Endothelial cell of umbilical vein (primary cell): ENCODE measurements at regions of chr12 and their contacts with region 1.

Region 1: DNA sequence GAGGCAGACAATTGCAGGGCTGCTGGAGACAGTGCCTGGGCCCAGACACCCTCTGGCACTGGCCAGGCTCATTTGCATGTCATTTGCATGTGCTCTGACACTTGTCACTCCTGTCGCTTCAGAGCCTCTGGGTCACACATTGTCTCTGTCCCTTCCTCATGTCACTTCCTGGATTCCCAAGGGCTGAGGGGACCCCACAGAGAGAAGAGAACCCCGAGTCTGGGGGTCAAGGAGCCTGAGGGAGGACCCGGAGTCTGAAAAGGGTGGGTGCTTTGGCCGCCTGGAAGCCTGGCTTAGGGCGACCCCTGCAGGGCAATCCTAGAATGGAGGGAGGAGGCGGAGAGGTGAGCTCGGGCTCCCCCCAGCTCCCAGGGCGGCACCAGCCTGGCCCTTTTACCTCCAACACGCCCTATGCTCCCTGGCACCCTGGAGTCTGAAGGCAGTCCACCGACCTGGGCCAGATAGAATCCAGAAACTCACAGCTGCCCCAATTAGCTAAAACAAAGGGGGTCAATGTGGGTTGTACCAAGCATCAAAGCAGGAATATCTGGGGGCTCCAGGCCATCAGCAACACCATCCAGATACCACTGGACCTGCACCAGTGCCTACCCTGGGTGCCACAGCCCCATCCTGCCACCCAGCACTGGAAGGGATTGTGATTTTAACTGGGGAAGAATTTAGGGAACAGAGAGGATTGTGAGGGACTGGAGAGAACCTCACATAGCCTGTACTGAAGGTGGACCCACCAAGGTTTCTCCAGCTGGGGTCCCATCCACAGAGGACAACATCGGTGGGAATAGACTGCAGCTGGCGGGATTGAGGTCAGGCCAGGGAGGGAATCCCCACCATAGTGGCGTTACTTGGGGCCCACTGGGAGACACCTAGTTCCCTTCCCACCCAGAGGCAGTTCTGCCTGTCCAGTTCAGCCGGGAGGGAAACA is 21.8 kb upstream of the KRT78 start:
- DNase-seq: peak; percentile 32
- H3K4me3 ChIP-seq: no peak overlapping the region
- H3K27ac ChIP-seq: no peak overlapping the region
- H3K4me1 ChIP-seq: peaks cover 12% of the 10 kb centered on the region
- H3K27me3 ChIP-seq: no peaks in the 10 kb centered on the region
- CTCF ChIP-seq: peak; percentile 79 to 82
- POLR2A ChIP-seq: no peak

Region 2: GRCh38 chr12:52156736-52157565 is 713.7 kb before region 1 on chr12:
- CTCF ChIA-PET with region 1: interaction called, 16 read pairs
- POLR2A ChIA-PET with region 1: no interaction called
- dilution Hi-C with region 1: no loop called
- intact Hi-C with region 1: loop called (anchors 1 kb)
- DNase-seq: peak; percentile 58
- H3K4me3 ChIP-seq: no peak overlapping the region
- H3K27ac ChIP-seq: no peak overlapping the region
- H3K4me1 ChIP-seq: peaks cover 2% of the 10 kb centered on the region
- H3K27me3 ChIP-seq: no peaks in the 10 kb centered on the region
- CTCF ChIP-seq: peak; percentile 93 to 94
- POLR2A ChIP-seq: no peak

Region 3: GRCh38 chr12:52372216-52373154 is 498.1 kb before region 1 on chr12:
- CTCF ChIA-PET with region 1: interaction called, 72 read pairs
- POLR2A ChIA-PET with region 1: no interaction called
- dilution Hi-C with region 1: no loop called
- intact Hi-C with region 1: no loop called
- DNase-seq: peak; percentile 73
- H3K4me3 ChIP-seq: no peak overlapping the region
- H3K27ac ChIP-seq: no peak overlapping the region
- H3K4me1 ChIP-seq: no peaks in the 10 kb centered on the region
- H3K27me3 ChIP-seq: peaks cover 13 to 19% of the 10 kb centered on the region in 2 experiments
- CTCF ChIP-seq: peak; percentile 69 to 77
- POLR2A ChIP-seq: no peak

Region 4: GRCh38 chr12:52380271-52380694 is 490.3 kb before region 1 on chr12:
- CTCF ChIA-PET with region 1: interaction called, 18 read pairs
- POLR2A ChIA-PET with region 1: no interaction called
- dilution Hi-C with region 1: no loop called
- intact Hi-C with region 1: no loop called
- DNase-seq: peak; percentile 20
- H3K4me3 ChIP-seq: no peak overlapping the region
- H3K27ac ChIP-seq: no peak overlapping the region
- H3K4me1 ChIP-seq: no peaks in the 10 kb centered on the region
- H3K27me3 ChIP-seq: peaks cover 2 to 14% of the 10 kb centered on the region in 2 experiments
- CTCF ChIP-seq: peak; percentile 51 to 68
- POLR2A ChIP-seq: no peak

Region 5: GRCh38 chr12:52390739-52391617 is 479.6 kb before region 1 on chr12:
- CTCF ChIA-PET with region 1: interaction called, 9 read pairs
- POLR2A ChIA-PET with region 1: no interaction called
- dilution Hi-C with region 1: no loop called
- intact Hi-C with region 1: loop called (anchors 5 kb)
- DNase-seq: peak; percentile 5
- H3K4me3 ChIP-seq: no peak overlapping the region
- H3K27ac ChIP-seq: no peak overlapping the region
- H3K4me1 ChIP-seq: no peaks in the 10 kb centered on the region
- H3K27me3 ChIP-seq: peaks cover 0 to 4% of the 10 kb centered on the region in 2 experiments
- CTCF ChIP-seq: peak; percentile 38 to 53
- POLR2A ChIP-seq: no peak

Region 6: DNA sequence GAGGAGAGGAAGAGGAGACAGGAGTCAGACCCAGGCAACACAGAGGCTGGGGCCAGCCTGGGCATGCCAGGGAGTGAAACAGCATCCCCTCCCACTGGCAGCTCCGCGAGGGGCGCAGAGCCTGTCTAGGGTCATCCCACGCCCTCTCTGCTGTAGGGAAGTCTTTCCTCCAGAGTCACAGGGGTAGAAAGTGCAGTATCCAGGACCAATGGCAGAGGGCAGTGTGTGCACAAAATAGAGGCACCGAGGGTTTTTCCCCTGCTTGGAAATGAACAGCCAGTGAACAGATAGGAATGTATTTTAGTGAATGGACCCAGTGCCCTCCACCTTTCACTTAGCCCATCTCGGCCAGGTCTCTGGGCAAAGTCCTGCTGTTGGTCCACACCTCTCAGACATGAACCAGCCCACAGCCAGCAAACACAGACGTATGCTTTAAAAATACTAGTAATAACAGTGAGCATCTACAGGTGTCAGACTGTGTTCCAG is 287.6 kb before region 1 on chr12:
- CTCF ChIA-PET with region 1: interaction called, 120 read pairs
- POLR2A ChIA-PET with region 1: no interaction called
- dilution Hi-C with region 1: no loop called
- intact Hi-C with region 1: loop called (anchors 1 kb)
- DNase-seq: peak; percentile 53
- H3K4me3 ChIP-seq: no peak overlapping the region
- H3K27ac ChIP-seq: no peak overlapping the region
- H3K4me1 ChIP-seq: no peaks in the 10 kb centered on the region
- H3K27me3 ChIP-seq: peaks cover 2% of the 10 kb centered on the region in 2 experiments
- CTCF ChIP-seq: peak; percentile 49 to 66
- POLR2A ChIP-seq: no peak